ENCODE measurements at regions of chr7 and their contacts with region 1.

Region 1: DNA sequence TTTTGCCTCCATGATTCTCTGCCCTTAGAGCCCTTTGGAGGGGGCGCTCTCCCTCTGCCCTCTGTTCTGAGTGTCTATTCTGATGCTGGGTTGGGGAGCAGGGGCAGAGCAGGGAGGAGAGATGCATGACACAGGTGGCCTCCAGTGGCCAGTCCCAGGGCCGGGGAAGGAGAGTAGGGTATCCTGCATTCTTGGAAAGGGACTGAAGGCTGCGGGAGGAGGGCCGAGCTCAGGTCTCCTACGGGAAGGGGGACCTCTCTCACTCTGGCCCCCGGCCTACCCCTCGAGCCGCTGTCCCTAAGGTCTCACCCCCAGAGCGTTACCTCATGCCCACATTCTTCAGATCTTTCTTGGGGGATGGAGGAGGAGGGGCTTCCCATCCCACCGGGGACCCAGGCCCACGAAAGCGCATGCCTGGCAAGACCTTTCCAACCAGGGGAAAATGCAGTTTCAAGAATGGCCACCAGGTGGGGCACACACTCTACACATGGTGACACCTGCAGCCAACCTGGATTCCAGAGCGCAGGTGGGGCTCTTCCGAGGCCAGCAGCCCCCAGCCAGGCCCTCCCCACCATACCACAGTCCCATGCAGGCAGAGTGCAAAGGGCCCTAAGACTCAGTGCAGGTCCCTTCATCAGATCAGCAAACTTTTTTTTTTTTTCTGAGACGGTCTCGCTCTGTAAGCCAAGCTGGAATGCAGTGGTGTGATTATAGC is 86.4 kb downstream of the MYL10 start:
- DNase-seq: peak; percentile 47 to 55
- ATAC-seq: peak; percentile 9 to 61 (median 32)
- H3K4me3 ChIP-seq: no peak overlapping the region
- H3K27ac ChIP-seq: no peak overlapping the region
- H3K4me1 ChIP-seq: peaks cover 0 to 11% (median 0%) of the 10 kb centered on the region in 9 donors
- H3K27me3 ChIP-seq: peaks cover 0 to 9% (median 0%) of the 10 kb centered on the region in 7 donors
- CTCF ChIP-seq: peak; percentile 83 to 94 (median 88)

Region 2: DNA sequence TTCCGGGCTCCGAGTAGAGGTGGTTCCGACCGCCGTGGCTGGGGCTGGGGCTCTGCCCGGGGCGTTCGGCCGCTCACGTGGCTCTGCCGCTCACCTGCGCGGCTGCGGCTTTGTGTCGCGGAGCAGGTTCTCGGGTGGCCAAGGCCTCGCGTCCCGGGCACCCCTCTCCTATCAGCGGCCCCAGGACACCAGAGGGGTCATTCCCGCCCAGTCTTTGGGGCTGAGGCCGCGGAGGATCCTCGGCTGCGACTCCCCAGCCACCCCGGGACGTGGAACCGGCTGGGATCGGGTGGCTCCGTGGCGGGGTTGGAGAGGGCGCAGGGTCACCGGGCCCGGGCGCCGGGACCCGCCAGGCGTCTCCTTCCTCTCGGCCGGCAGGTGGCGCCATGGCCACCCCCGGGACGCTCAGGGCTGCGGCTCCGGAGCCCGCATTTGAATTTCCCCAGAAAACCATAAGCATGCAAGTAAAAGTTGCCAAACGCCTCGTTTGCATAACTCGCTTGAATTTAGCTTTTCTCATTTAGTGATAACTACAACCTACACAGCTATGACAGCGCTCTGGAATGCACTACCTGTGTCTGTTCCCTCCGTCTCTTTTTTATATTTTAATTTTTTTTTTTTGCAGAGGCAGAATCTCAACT is 178.8 kb before region 1 on chr7:
- intact Hi-C with region 1: loop called (anchors 2 to 10 kb)
- DNase-seq: peak; percentile 31 to 66
- ATAC-seq: peak; percentile 90 to 95 (median 92)
- H3K4me3 ChIP-seq: peak overlapping the region; percentile 48 to 64 (median 58)
- H3K27ac ChIP-seq: peak overlapping the region in 1 of 10 donors; percentile 43
- H3K4me1 ChIP-seq: peaks cover 0 to 21% (median 16%) of the 10 kb centered on the region in 9 donors
- H3K27me3 ChIP-seq: peaks cover 0 to 74% (median 41%) of the 10 kb centered on the region in 7 donors
- CTCF ChIP-seq: peak; percentile 83 to 99 (median 94)

Region 3: GRCh38 chr7:101783381-101784181 is 240.9 kb after region 1 on chr7:
- intact Hi-C with region 1: no loop called
- DNase-seq: no peak
- ATAC-seq: peak in 1 of 8 donors; percentile 30
- H3K4me3 ChIP-seq: no peak overlapping the region
- H3K27ac ChIP-seq: no peak overlapping the region
- H3K4me1 ChIP-seq: peaks cover 0 to 22% (median 16%) of the 10 kb centered on the region in 9 donors
- H3K27me3 ChIP-seq: no peaks in the 10 kb centered on the region
- CTCF ChIP-seq: no peak

Region 4: GRCh38 chr7:102272075-102272917 is 729.6 kb after region 1 on chr7:
- intact Hi-C with region 1: loop called (anchors 1 to 2 kb)
- DNase-seq: peak; percentile 66 to 82
- ATAC-seq: peak; percentile 87 to 90 (median 89)
- H3K4me3 ChIP-seq: no peak overlapping the region
- H3K27ac ChIP-seq: no peak overlapping the region
- H3K4me1 ChIP-seq: peaks cover 0 to 7% (median 0%) of the 10 kb centered on the region in 9 donors
- H3K27me3 ChIP-seq: no peaks in the 10 kb centered on the region
- CTCF ChIP-seq: peak; percentile 76 to 95 (median 89)

Region 5: DNA sequence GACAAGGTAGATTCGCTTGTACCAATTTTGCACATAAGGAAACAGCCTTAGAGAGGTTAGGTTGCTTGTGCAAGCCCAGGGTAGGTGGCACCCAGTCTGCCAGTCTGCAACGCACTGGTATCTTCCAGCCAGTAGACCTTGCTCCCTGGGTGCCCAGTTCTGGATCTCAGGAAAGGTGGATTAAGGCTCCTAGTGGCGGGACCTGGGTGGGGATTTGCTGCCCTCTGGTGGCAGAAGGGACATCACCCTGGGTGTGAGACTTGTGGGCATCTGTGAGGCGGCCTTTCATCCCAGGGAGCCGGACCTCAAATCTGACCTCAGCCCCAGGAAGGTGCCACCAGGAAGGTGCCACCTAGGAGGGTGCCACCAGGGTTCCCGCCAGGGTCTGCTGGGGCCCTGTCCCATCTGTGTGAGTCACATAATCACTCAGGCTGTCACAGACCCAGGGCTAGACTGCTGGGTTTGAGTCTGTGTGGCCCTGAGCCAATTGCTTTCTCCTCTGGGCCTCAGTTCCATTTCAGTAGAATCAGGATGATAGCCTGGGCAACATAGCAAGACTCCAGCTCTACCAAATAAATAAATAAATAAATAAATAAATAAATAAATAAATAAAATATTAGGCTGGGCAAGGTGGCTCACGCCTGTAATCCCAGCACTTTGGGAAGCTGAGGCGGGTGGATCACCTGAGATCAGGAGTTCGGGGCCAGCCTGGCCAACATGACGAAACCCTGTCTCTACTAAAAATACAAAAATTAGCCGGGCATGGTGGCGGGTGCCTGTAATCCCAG is 848.2 kb after region 1 on chr7:
- intact Hi-C with region 1: loop called in 2 of 10 experiments (anchors 5 to 10 kb)
- DNase-seq: peak; percentile 78 to 81
- ATAC-seq: peak; percentile 74 to 84 (median 82)
- H3K4me3 ChIP-seq: no peak overlapping the region
- H3K27ac ChIP-seq: no peak overlapping the region
- H3K4me1 ChIP-seq: peaks cover 0 to 8% (median 6%) of the 10 kb centered on the region in 9 donors
- H3K27me3 ChIP-seq: no peaks in the 10 kb centered on the region
- CTCF ChIP-seq: peak; percentile 82 to 96 (median 93)

Region 6: DNA sequence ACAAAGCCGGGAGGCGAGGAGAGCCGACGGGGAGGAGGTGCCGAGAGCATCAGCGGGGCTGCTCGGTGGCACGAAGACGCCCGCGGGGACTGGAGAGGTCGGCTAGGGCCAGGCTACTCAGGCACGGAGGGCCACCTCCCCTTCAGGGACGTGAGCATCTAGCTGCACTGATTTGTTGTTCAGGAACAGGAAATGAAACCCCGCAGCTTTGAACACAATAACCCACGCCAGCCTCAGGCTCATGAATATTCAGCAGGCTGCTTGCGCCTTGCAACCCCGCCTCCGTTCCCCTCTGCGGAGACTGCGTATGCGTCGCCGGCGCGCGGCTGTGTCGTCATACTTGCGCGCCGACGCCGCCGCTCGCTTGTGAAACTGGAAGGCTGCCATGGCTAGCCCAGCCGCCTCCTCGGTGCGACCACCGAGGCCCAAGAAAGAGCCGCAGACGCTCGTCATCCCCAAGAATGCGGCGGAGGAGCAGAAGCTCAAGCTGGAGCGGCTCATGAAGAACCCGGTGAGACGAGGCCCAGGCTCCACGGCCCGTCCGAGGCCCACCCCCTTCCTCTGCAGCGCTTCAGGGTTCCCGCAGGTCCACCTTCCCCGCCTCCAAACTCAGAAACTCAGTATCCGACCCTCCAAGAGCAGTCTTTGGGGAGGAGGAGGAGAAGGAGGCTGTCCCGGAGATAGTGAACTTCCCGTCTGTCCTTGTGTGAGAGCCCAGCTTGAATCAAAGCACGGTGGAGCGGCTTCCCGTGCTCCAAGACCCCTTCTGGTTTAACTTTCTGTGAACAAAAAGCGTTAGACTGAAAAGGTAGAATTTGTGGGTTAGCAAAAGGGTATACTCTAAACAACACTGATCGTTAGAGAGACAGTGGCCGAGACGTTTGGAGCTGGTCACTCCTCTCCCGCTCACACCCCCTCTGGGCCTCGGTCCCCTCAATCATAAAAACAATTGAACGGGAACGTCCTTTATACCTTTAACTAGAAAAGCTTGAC is 853.6 kb after region 1 on chr7 and contains the start of gene PRKRIP1:
- intact Hi-C with region 1: loop called in 2 of 10 experiments (anchors 5 to 10 kb)
- DNase-seq: peak; percentile 73 to 88
- ATAC-seq: peak; percentile 90 to 96 (median 94)
- H3K4me3 ChIP-seq: peak within 1 kb of the TSS; percentile 76 to 99 (median 96)
- H3K27ac ChIP-seq: peak within 1 kb of the TSS; percentile 43 to 94 (median 87)
- H3K4me1 ChIP-seq: peaks cover 0 to 17% (median 14%) of the 10 kb centered on the region in 9 donors
- H3K27me3 ChIP-seq: no peaks in the 10 kb centered on the region
- CTCF ChIP-seq: no peak
- total RNA-seq, gene PRKRIP1: 7.1 to 14.7 (median 11.3) TPM

Measured in heart right ventricle (tissue), 16 donors.